GM12878 (cell line): ENCODE measurements at regions of chr14 and their contacts with region 1.

Region 1: DNA sequence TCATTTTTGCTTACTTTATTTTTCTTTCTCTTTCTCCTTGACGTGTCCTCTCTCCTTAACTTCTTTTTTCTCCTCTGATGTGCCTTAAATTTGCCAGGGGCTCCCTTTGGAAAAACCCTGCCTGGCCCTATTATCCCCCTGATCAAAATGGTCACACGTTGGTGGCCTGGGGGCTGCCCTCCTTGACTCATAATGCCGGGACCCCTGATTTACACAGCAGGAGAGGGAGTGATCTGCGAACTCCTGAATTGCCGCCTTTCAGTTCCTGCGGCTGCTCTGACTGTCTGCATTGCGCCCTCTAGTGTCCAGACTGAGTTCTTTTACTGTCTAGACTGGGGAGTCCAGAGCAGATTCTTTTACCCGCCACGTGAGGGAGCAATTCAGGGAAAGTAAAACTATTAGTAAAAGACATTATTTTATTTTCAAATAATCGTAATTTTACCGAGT is 44.8 kb upstream of the GZMB start:
- DNase-seq: peak; percentile 72
- ATAC-seq: peak; percentile 88
- H3K4me3 ChIP-seq: peak overlapping the region; percentile 60; the same call in 1 of the 2 replicates
- H3K27ac ChIP-seq: peak overlapping the region; percentile 3; the same call in 1 of the 2 replicates
- H3K4me1 ChIP-seq: peaks cover 9% of the 10 kb centered on the region
- H3K27me3 ChIP-seq: no peaks in the 10 kb centered on the region
- CTCF ChIP-seq: peak; percentile 94 to 100 (median 98); a peak in 5 of 6 replicates
- EP300 ChIP-seq: no peak
- POLR2A ChIP-seq: no peak
- RAD21 ChIP-seq: peak; percentile 85

Region 2: GRCh38 chr14:24473211-24473610 is 205.6 kb before region 1 on chr14:
- CTCF ChIA-PET with region 1: no interaction called
- POLR2A ChIA-PET with region 1: no interaction called
- RAD21 ChIA-PET with region 1: no interaction called
- SMC1A ChIA-PET with region 1: no interaction called
- in situ Hi-C with region 1: loop called (anchors 10 kb)
- intact Hi-C with region 1: no loop called
- DNase-seq: no peak
- ATAC-seq: no peak
- H3K4me3 ChIP-seq: no peak overlapping the region
- H3K27ac ChIP-seq: no peak overlapping the region
- H3K4me1 ChIP-seq: no peaks in the 10 kb centered on the region
- H3K27me3 ChIP-seq: no peaks in the 10 kb centered on the region
- CTCF ChIP-seq: no peak
- EP300 ChIP-seq: no peak
- POLR2A ChIP-seq: no peak
- RAD21 ChIP-seq: no peak

Region 3: DNA sequence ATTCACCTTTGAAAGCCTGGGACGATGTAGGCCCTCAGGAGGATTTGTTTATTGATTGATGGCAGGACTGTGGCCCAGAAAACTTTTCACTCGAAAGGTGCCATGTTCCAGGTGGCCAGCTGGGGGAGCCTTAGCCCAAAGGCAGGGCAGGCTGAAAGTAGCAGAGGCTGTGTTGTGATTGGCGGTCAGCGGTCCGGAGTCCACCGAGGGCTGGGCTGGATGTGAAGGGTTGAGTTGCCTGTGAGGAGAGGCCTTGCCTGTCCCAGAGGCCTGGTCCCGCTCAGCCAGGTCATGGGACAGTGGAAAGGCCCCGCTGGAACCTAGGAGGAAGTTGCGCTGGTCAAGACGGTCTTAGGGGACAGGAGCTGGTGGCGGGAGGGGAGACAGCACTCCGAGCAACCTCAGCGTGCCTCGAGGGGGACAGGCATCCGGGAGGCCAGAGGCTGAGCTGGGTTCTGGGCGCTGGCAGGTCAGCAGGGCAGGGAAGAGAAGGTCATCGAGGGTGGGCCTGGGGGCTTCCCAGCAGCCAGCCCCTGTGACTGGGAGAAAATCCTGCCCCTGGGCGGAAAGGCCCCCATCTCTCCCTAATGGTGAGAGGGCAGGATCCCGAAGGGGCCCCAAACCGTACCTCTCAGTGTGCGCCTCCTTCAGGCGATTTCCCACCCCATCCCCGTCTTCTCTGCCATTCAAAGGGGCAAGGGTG is 197.1 kb before region 1 on chr14:
- CTCF ChIA-PET with region 1: interaction called, 11 read pairs
- POLR2A ChIA-PET with region 1: no interaction called
- RAD21 ChIA-PET with region 1: no interaction called
- SMC1A ChIA-PET with region 1: interaction called, 4 read pairs
- in situ Hi-C with region 1: loop called (anchors 10 kb)
- intact Hi-C with region 1: loop called (anchors 2 kb)
- DNase-seq: peak; percentile 17
- ATAC-seq: peak; percentile 99
- H3K4me3 ChIP-seq: no peak overlapping the region
- H3K27ac ChIP-seq: no peak overlapping the region
- H3K4me1 ChIP-seq: peaks cover 13% of the 10 kb centered on the region
- H3K27me3 ChIP-seq: no peaks in the 10 kb centered on the region
- CTCF ChIP-seq: peak; percentile 78 to 97 (median 90)
- EP300 ChIP-seq: no peak
- POLR2A ChIP-seq: peak; percentile 28; the same call in 1 of the 2 replicates
- RAD21 ChIP-seq: peak; percentile 90

Region 4: GRCh38 chr14:24605435-24606190 is 73.2 kb before region 1 on chr14:
- CTCF ChIA-PET with region 1: interaction called, 41 read pairs
- POLR2A ChIA-PET with region 1: interaction called, 4 read pairs
- RAD21 ChIA-PET with region 1: interaction called, 8 read pairs
- SMC1A ChIA-PET with region 1: interaction called, 15 read pairs
- in situ Hi-C with region 1: loop called (anchors 5 kb)
- intact Hi-C with region 1: loop called (anchors 1 kb)
- DNase-seq: no peak
- ATAC-seq: peak; percentile 98
- H3K4me3 ChIP-seq: no peak overlapping the region
- H3K27ac ChIP-seq: no peak overlapping the region
- H3K4me1 ChIP-seq: peaks cover 8% of the 10 kb centered on the region
- H3K27me3 ChIP-seq: no peaks in the 10 kb centered on the region
- CTCF ChIP-seq: peak; percentile 73 to 98 (median 97)
- EP300 ChIP-seq: no peak
- POLR2A ChIP-seq: no peak
- RAD21 ChIP-seq: peak; percentile 93

Region 5: GRCh38 chr14:24690492-24690891 is 11.7 kb after region 1 on chr14:
- CTCF ChIA-PET with region 1: interaction called, 17 read pairs
- POLR2A ChIA-PET with region 1: interaction called, 3 read pairs
- RAD21 ChIA-PET with region 1: interaction called, 6 read pairs
- SMC1A ChIA-PET with region 1: interaction called, 16 read pairs
- in situ Hi-C with region 1: no loop called
- intact Hi-C with region 1: no loop called
- DNase-seq: no peak
- ATAC-seq: peak; percentile 67
- H3K4me3 ChIP-seq: no peak overlapping the region
- H3K27ac ChIP-seq: no peak overlapping the region
- H3K4me1 ChIP-seq: peaks cover 18% of the 10 kb centered on the region
- H3K27me3 ChIP-seq: no peaks in the 10 kb centered on the region
- CTCF ChIP-seq: peak; percentile 30 to 37 (median 36); a peak in 5 of 6 replicates
- EP300 ChIP-seq: no peak
- POLR2A ChIP-seq: no peak
- RAD21 ChIP-seq: peak; percentile 58

Region 6: GRCh38 chr14:25267186-25267585 is 588.4 kb after region 1 on chr14:
- CTCF ChIA-PET with region 1: no interaction called
- POLR2A ChIA-PET with region 1: no interaction called
- RAD21 ChIA-PET with region 1: no interaction called
- SMC1A ChIA-PET with region 1: no interaction called
- in situ Hi-C with region 1: no loop called
- intact Hi-C with region 1: no loop called
- DNase-seq: no peak
- ATAC-seq: no peak
- H3K4me3 ChIP-seq: no peak overlapping the region
- H3K27ac ChIP-seq: no peak overlapping the region
- H3K4me1 ChIP-seq: no peaks in the 10 kb centered on the region
- H3K27me3 ChIP-seq: no peaks in the 10 kb centered on the region
- CTCF ChIP-seq: no peak
- EP300 ChIP-seq: no peak
- POLR2A ChIP-seq: no peak
- RAD21 ChIP-seq: no peak